Posterior cingulate gyrus (tissue), 11 donors: ENCODE measurements at regions of chr9 and their contacts with region 1.

Region 1: GRCh38 chr9:87973730-87974292 is 522 bp downstream of the CDK20 start:
- DNase-seq: peak in 1 of 10 donors; percentile 78

Region 2: DNA sequence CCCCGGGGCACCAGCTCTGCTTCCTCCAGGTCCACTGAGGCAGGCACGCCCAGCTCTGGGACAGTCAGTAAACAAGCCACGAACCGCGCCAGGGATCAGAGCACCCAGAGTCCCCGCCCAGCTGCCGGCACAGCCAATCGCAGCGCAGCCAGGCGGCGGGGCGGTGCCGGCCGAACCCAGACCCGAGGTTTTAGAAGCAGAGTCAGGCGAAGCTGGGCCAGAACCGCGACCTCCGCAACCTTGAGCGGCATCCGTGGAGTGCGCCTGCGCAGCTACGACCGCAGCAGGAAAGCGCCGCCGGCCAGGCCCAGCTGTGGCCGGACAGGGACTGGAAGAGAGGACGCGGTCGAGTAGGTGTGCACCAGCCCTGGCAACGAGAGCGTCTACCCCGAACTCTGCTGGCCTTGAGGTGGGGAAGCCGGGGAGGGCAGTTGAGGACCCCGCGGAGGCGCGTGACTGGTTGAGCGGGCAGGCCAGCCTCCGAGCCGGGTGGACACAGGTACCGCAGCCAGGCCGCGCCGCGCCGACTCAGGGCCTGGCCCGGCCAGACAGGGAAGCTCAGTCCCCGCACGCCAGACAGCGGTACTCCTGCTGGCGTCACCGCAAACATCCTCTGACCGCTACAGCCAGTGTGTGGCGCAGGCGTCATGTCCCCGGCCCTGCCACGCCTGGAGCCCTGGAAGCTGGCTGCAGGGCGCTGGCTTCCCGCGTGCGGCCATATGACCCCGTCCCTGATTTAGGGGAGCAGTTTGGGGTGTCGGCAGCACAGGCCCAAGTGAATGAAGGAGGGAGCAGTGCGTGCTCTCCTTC is 247.7 kb before region 1 on chr9 and contains the start of gene CTSL:
- intact Hi-C with region 1: loop called (anchors 5 kb)
- DNase-seq: peak; percentile 90 to 99 (median 94)

Region 3: DNA sequence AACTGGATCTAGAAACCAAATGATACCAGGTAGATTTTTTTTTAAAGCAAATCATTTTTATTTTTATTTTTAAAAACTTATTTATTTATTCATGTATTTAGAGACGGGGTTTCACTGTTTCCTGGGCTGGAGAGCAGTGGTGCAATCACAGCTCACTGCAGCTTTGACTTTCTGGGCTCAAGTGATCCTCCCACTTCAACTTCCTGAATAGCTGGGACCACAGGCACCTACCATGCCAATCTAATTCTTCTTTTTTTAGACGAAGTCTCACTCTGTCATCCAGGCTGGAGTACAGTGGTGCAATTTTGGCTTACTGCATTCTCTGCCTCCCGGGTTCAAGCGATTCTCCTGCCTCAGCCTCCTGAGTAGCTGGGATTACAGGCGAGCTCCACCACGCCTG is 41.8 kb after region 1 on chr9:
- intact Hi-C with region 1: no loop called
- DNase-seq: no peak